ENCODE measurements at regions of chr1 and their contacts with region 1.

Region 1: DNA sequence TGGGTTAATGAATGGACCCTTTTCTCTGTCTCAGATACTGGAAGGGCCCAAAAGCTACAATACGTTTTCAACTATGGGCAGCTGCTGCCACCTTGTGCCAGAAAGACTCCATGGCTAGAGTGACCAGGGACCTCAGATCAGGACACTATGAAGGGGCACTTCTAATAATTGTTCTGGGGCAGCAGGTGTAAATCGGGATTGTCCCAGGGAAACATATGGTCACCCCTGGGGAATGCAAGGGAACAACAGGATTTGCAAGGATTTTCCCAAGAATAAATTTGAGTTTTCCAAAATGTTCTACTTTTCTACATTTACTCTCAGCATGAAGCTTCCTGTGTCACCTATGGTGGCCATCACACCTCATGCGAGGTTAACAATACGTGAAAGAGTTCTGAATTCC is 12.0 kb upstream of the FCAMR start:
- DNase-seq: peak; percentile 74
- ATAC-seq: peak; percentile 81
- H3K4me3 Mint-ChIP-seq: no peak overlapping the region
- H3K27ac Mint-ChIP-seq: no peak overlapping the region
- H3K4me1 Mint-ChIP-seq: peaks cover 3% of the 10 kb centered on the region
- H3K27me3 Mint-ChIP-seq: peaks cover 2% of the 10 kb centered on the region

Region 2: GRCh38 chr1:206635080-206635977 is 346.9 kb before region 1 on chr1 and contains the start of gene DYRK3:
- CTCF ChIA-PET with region 1: interaction called, 7 read pairs
- POLR2A ChIA-PET with region 1: no interaction called
- intact Hi-C with region 1: loop called (anchors 1 to 10 kb)
- DNase-seq: peak; percentile 97
- ATAC-seq: peak; percentile 93
- H3K4me3 Mint-ChIP-seq: peak within 1 kb of the TSS; percentile 76
- H3K27ac Mint-ChIP-seq: peak within 1 kb of the TSS; percentile 87
- H3K4me1 Mint-ChIP-seq: peaks cover 27% of the 10 kb centered on the region
- H3K27me3 Mint-ChIP-seq: peaks cover 7% of the 10 kb centered on the region
- total RNA-seq, gene DYRK3: 8.3 to 8.7 TPM

Region 3: GRCh38 chr1:206865013-206865671 is 117.1 kb before region 1 on chr1 and contains the start of gene IL20:
- CTCF ChIA-PET with region 1: interaction called, 4 read pairs
- POLR2A ChIA-PET with region 1: no interaction called
- intact Hi-C with region 1: loop called in 1 of 2 experiments (anchors 1 kb)
- DNase-seq: peak; percentile 95
- ATAC-seq: peak; percentile 96
- H3K4me3 Mint-ChIP-seq: no peak within 1 kb of the TSS
- H3K27ac Mint-ChIP-seq: no peak within 1 kb of the TSS
- H3K4me1 Mint-ChIP-seq: peaks cover 18% of the 10 kb centered on the region
- H3K27me3 Mint-ChIP-seq: peaks cover 8% of the 10 kb centered on the region
- total RNA-seq, gene IL20: not detected

Region 4: DNA sequence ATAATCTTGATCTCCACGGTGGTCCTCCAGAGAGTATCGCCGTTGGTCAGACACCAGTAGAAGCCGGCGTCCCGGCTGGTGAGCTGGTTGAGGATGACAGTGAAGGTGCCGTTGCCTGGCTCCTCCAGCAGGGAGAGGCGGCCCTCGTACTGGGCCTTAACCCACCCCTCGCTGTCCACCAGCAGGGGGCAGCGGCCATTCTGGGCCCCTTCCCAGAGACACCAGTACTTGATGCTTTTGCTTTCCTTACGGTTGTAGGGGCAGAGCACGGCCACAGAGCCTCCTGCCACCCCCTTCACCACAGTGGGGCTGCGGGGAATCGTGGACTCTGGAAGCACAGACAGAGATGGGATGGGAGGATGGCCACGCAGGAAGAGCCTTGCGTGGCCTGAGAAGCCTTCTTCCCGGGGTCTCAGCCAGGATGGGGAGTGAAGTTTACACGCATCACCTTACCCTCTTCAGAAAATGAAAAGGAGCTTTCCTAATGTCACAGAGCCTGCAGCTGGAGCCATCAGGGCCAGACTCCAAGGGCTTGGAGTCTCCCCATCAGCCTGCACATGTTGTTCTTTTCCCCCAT is 46.6 kb before region 1 on chr1:
- CTCF ChIA-PET with region 1: interaction called, 48 read pairs
- POLR2A ChIA-PET with region 1: no interaction called
- intact Hi-C with region 1: loop called in 1 of 2 experiments (anchors 1 kb)
- DNase-seq: peak; percentile 79
- ATAC-seq: peak; percentile 76
- H3K4me3 Mint-ChIP-seq: no peak overlapping the region
- H3K27ac Mint-ChIP-seq: no peak overlapping the region
- H3K4me1 Mint-ChIP-seq: peaks cover 23% of the 10 kb centered on the region
- H3K27me3 Mint-ChIP-seq: no peaks in the 10 kb centered on the region

Region 5: GRCh38 chr1:206962272-206962671 is 19.9 kb before region 1 on chr1:
- CTCF ChIA-PET with region 1: interaction called, 64 read pairs
- POLR2A ChIA-PET with region 1: no interaction called
- intact Hi-C with region 1: loop called in 1 of 2 experiments (anchors 2 kb)
- DNase-seq: no peak
- ATAC-seq: peak; percentile 63
- H3K4me3 Mint-ChIP-seq: no peak overlapping the region
- H3K27ac Mint-ChIP-seq: no peak overlapping the region
- H3K4me1 Mint-ChIP-seq: peaks cover 23% of the 10 kb centered on the region
- H3K27me3 Mint-ChIP-seq: no peaks in the 10 kb centered on the region

Region 6: DNA sequence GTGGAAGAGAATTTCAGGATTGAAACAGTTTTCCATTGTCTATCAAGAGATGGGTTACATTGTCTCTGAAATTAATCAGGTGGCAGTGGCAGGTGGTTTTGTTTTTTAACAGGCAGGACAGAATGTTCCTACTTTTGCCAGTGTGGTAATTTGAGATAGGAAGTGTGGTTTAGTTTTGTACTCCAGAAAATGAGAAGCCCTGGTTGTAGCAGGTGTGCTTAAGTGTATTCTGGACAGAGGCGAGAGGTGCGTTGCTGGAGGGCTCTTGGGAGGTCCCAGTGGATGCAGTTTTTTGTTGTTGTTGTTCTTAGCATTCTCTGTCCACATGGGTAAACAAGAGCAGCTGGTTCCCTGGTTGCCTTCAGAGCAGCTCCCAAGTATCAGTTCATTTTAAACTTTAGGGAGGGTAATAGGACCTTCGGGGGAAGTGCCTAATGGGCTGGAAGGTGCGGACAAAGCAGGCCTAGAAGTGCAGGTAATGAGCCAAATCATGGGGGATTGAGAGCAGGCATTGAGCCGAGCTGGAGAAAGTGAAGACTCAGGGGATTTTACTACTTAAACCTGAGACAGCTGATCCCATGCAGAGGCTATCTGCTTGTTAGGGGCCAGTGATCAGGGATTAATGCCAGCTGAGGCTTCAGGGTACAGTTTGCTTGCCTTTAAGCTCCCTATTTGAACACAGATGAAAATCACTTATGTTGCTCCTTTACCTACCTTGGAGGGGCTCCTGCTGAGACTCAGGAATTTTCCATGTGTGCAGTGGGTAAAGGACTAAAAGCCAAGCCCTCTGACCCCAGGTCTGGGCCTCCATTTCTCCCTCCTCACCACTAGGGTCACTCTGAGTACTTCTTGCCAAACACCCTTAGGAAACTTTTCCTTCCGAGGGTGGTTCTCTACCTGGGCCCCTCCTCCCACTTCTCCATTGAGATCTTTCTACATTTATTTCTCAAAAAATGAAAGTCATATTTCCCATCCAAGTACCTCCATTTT is 77.0 kb after region 1 on chr1:
- CTCF ChIA-PET with region 1: no interaction called
- POLR2A ChIA-PET with region 1: no interaction called
- intact Hi-C with region 1: no loop called
- DNase-seq: no peak
- ATAC-seq: no peak
- H3K4me3 Mint-ChIP-seq: no peak overlapping the region
- H3K27ac Mint-ChIP-seq: no peak overlapping the region
- H3K4me1 Mint-ChIP-seq: peaks cover 2% of the 10 kb centered on the region
- H3K27me3 Mint-ChIP-seq: no peaks in the 10 kb centered on the region

Measured in activated CD4-positive, alpha-beta T cell treated with anti-CD3 and anti-CD28 coated beads for 36 hours (primary cell).